K562 (cell line): ENCODE measurements at regions of chr6 and their contacts with region 1.

Region 1: DNA sequence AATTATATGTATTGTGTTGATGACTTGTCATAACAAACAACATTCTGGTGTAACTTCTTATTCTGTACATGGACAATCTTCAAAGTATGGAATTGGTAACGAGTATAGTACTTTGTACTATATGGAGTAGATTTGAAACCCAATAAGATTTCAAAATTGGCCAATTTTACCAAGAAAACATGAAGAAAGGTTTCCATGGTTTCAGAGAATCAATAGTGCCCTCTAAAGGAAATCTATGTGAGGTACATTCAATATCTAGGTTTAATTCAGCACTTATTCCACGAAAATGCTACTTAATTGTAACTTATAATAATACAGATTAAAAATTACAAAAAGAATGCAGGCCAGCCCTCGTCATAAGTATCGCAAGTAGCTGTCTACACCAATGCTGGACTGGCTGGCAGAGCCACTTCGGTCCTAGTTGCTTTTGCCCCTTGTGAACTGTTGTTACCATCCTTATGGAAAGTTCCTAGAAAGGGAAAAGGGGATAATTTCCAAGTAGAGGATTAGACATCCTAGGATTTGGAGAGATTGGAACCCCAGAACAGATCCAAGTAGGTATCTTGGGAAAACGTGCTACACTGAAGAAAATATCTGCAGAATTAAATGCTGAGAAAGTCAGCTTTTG is 70.9 kb downstream of the LCA5 start:
- DNase-seq: peak in 1 of 4 experiments; percentile 24
- ATAC-seq: no peak
- H3K4me3 ChIP-seq: no peak overlapping the region
- H3K27ac ChIP-seq: no peak overlapping the region
- H3K4me1 ChIP-seq: peaks cover 0 to 16% of the 10 kb centered on the region in 2 experiments; a peak in 2 of 5 replicates
- H3K27me3 ChIP-seq: no peaks in the 10 kb centered on the region
- CTCF ChIP-seq: peak in 2 of 3 experiments; percentile 22 to 57; a peak in 4 of 6 replicates
- EP300 ChIP-seq: no peak
- POLR2A ChIP-seq: no peak
- RAD21 ChIP-seq: peak; percentile 69 to 70

Region 2: GRCh38 chr6:78947962-78948361 is 518.4 kb before region 1 on chr6:
- CTCF ChIA-PET with region 1: no interaction called
- POLR2A ChIA-PET with region 1: interaction called, 4 read pairs
- in situ Hi-C with region 1: no loop called
- intact Hi-C with region 1: loop called (anchors 10 kb)
- DNase-seq: no peak
- ATAC-seq: no peak
- H3K4me3 ChIP-seq: no peak overlapping the region
- H3K27ac ChIP-seq: no peak overlapping the region
- H3K4me1 ChIP-seq: no peaks in the 10 kb centered on the region
- H3K27me3 ChIP-seq: no peaks in the 10 kb centered on the region
- CTCF ChIP-seq: no peak
- EP300 ChIP-seq: no peak
- POLR2A ChIP-seq: no peak
- RAD21 ChIP-seq: no peak

Region 3: DNA sequence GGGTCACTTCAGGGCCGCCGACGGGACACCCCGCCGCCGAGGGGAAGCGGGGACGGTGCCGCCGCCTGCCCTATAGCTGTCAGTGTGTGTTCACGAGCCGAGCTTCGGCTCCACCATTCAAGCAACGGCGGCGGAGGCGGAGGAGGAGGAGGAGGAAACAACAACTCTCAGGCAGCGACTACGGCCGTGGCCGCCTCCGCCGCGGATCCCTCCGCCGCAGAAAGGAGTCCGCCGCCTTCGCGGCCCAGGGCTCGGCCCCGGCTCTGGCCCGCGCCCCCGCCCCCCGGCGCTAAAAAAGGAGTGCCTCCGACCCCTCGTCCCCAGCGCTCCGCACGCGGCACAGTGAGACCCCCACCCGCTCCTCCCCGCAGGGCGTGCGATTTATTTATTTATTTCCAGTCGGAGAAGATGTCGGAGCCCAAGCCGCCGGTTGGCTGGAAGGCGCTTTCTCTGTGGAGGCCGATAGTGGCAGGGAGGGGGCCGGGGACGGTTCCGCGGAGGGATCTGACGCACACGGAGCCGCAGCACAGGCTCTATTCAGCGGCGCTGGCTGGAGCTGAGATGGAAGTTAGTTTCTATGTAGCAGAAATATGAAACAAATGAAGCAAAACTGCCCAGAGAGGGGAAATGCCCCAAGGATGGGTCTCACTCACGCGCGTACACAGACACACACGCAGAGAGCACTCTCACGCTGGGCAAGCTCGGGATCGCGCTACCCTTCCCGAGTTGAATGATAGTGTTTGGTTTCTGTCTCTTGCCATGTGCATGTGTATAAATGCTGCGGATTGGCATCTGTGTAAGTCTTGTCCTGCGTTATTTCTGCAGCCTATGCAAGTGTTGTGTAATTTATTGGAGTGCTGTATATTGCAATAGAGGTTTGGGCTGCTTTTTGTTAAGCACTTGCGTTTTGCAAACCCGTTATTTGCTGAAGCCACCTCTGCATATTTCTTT is 388.0 kb before region 1 on chr6 and contains the start of gene PHIP:
- CTCF ChIA-PET with region 1: no interaction called
- POLR2A ChIA-PET with region 1: interaction called, 3 read pairs
- in situ Hi-C with region 1: no loop called
- intact Hi-C with region 1: loop called (anchors 5 kb)
- DNase-seq: peak; percentile 80 to 94 (median 82)
- ATAC-seq: peak; percentile 78
- H3K4me3 ChIP-seq: peak within 1 kb of the TSS; percentile 83
- H3K27ac ChIP-seq: peak within 1 kb of the TSS; percentile 95
- H3K4me1 ChIP-seq: peaks cover 0 to 9% of the 10 kb centered on the region in 2 experiments; a peak in 3 of 5 replicates
- H3K27me3 ChIP-seq: no peaks in the 10 kb centered on the region
- CTCF ChIP-seq: no peak
- EP300 ChIP-seq: no peak; the same call in none of the 2 replicates
- POLR2A ChIP-seq: peak; percentile 90
- RAD21 ChIP-seq: no peak
- polyA plus RNA-seq, gene PHIP: 8.1 to 8.9 TPM

Region 4: DNA sequence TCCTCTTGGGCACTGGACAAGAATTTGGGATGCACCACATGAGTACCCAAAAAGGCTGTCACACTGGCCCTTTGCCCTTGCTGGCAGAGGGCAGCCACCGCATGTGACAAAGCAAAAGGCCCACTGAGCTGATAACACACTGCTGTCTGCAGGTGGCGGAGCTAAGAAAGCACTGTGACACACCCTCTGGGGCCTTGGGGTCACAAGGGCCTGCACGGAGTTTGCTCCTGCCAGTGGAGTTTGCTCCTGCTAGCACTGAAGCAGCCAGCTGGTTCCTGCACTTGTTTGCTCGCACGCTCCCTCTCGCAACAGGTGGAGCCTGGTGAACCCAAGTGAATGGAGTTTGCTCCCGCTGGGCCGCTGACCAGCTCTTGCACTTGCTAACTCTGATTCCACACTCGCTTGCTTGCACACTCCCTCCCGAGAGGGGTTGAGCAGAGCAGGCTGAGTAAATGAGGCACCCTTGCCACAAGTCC is 61.6 kb before region 1 on chr6:
- CTCF ChIA-PET with region 1: interaction called, 5 read pairs
- POLR2A ChIA-PET with region 1: no interaction called
- in situ Hi-C with region 1: no loop called
- intact Hi-C with region 1: loop called (anchors 5 kb)
- DNase-seq: peak in 2 of 4 experiments; percentile 8 to 64
- ATAC-seq: peak; percentile 82
- H3K4me3 ChIP-seq: no peak overlapping the region
- H3K27ac ChIP-seq: no peak overlapping the region
- H3K4me1 ChIP-seq: peaks cover 4 to 6% of the 10 kb centered on the region in 2 experiments; a peak in 2 of 5 replicates
- H3K27me3 ChIP-seq: no peaks in the 10 kb centered on the region
- CTCF ChIP-seq: no peak
- EP300 ChIP-seq: no peak
- POLR2A ChIP-seq: no peak
- RAD21 ChIP-seq: no peak; a peak in 1 of 4 replicates

Region 5: GRCh38 chr6:79544939-79545450 is 78.7 kb after region 1 on chr6:
- CTCF ChIA-PET with region 1: no interaction called
- POLR2A ChIA-PET with region 1: interaction called, 4 read pairs
- in situ Hi-C with region 1: no loop called
- intact Hi-C with region 1: loop called (anchors 2 kb)
- DNase-seq: peak; percentile 82 to 96 (median 86)
- ATAC-seq: peak; percentile 95
- H3K4me3 ChIP-seq: no peak overlapping the region
- H3K27ac ChIP-seq: peak overlapping the region; percentile 91
- H3K4me1 ChIP-seq: peaks cover 0 to 40% of the 10 kb centered on the region in 2 experiments; a peak in 3 of 5 replicates
- H3K27me3 ChIP-seq: no peaks in the 10 kb centered on the region
- CTCF ChIP-seq: peak; percentile 71 to 85 (median 74)
- EP300 ChIP-seq: peak; percentile 94
- POLR2A ChIP-seq: no peak
- RAD21 ChIP-seq: peak; percentile 62 to 66

Region 6: GRCh38 chr6:79672631-79673111 is 206.3 kb after region 1 on chr6:
- CTCF ChIA-PET with region 1: no interaction called
- POLR2A ChIA-PET with region 1: no interaction called
- in situ Hi-C with region 1: no loop called
- intact Hi-C with region 1: loop called (anchors 5 kb)
- DNase-seq: peak in 3 of 4 experiments; percentile 16 to 56 (median 18)
- ATAC-seq: peak; percentile 73
- H3K4me3 ChIP-seq: no peak overlapping the region
- H3K27ac ChIP-seq: no peak overlapping the region
- H3K4me1 ChIP-seq: peaks cover 5 to 10% of the 10 kb centered on the region in 2 experiments; a peak in 3 of 5 replicates
- H3K27me3 ChIP-seq: no peaks in the 10 kb centered on the region
- CTCF ChIP-seq: peak; percentile 32 to 71 (median 60); a peak in 5 of 6 replicates
- EP300 ChIP-seq: no peak
- POLR2A ChIP-seq: no peak
- RAD21 ChIP-seq: peak; percentile 64 to 88

Region 7: GRCh38 chr6:79713701-79714322 is 247.5 kb after region 1 on chr6:
- CTCF ChIA-PET with region 1: interaction called, 4 read pairs
- POLR2A ChIA-PET with region 1: no interaction called
- in situ Hi-C with region 1: no loop called
- intact Hi-C with region 1: loop called (anchors 2 kb)
- DNase-seq: peak; percentile 50 to 75 (median 50)
- ATAC-seq: peak; percentile 93
- H3K4me3 ChIP-seq: no peak overlapping the region
- H3K27ac ChIP-seq: no peak overlapping the region
- H3K4me1 ChIP-seq: no peaks in the 10 kb centered on the region
- H3K27me3 ChIP-seq: 0 out of 5 replicates have a peak, but pooled peaks cover 0 to 8% of the 10 kb centered on the region in 2 experiments
- CTCF ChIP-seq: peak; percentile 64 to 78 (median 73)
- EP300 ChIP-seq: no peak
- POLR2A ChIP-seq: no peak
- RAD21 ChIP-seq: peak; percentile 73 to 79